ENCODE measurements at regions of chr3 and their contacts with region 1.

Region 1: DNA sequence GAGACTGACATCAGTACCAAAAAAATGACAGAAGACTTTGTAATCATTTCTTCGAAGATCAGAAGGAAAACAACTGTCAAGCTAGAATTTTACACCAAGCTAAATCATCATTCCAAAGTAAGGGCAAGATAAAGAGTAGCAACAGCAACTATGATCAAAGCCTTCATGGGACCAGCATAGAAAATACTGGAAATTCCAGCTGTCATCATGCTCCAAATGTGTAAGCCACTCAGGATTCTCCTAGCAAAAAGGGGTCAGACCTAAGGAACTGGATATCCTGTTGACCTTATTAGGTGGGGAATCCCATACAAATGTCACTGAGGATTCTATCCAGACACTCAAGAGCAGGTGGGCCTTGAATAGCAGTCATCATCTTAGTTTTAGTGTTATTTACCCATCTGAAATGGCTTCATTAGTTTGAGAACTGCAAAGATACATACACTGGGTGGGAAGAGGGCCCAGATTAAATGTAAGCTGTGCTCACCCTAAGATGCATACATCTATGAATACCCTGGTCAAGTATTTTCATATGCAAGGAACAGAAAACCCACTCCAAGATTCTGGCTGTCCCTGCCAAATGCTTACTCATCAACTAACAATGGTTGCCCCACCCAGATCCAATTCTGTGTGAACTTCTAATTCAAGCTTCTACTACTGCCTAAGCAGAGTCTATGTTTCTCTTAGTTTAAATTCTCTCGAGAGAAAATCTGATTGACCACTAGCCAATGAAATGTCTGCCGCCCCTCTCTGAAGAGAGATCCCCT is 33.5 kb downstream of the CLDN18 start:
- DNase-seq: no peak
- ATAC-seq: no peak
- H3K4me3 ChIP-seq: no peak overlapping the region
- H3K27ac ChIP-seq: no peak overlapping the region
- H3K4me1 ChIP-seq: peaks cover 29% of the 10 kb centered on the region
- H3K27me3 ChIP-seq: no peaks in the 10 kb centered on the region
- CTCF ChIP-seq: no peak
- EP300 ChIP-seq: no peak
- POLR2A ChIP-seq: no peak
- RAD21 ChIP-seq: no peak

Region 2: DNA sequence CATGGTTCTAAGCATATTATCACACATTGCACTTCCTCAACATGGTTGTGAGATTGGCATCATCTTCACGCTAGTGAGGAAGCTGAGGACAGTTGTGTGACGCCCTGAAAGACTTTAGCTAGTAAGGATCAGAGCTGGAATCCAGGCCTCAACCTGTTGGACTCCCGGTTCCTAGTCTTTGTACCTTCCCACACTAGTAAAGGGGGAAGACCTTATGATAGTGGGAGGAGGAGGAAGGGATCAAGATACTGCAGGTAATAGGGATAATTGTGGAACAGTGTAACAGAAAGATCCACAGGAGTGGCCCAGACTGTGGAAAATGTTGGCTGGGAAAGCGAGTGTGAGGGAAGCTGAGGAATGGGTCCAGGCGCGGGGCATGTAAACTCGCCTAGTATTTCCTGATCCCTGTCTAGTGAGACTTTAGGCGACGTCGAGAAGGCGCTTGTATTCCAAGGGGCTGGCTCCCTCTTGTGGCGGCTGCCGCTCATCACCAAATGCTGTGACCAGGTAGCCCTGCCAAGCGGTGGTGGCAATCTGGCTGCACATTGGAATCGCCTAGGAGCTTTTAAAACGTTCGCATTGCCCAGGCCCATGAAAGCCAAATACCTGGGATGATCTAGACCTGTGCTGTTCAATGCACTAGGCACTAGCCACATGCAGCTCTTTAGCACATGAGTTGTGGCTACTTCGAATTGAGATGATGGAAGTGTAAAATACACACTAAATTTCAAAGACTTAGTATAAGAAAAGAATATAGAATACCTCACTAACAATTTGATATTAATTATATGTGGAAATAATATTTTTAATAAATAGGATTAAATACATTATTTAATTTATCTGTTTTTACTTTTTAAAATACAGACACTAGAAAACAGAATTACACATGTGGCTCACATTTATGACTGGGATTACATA is 72.3 kb before region 1 on chr3:
- CTCF ChIA-PET with region 1: interaction called, 11 read pairs
- POLR2A ChIA-PET with region 1: interaction called, 3 read pairs
- RAD21 ChIA-PET with region 1: no interaction called
- SMC1A ChIA-PET with region 1: interaction called, 11 read pairs
- in situ Hi-C with region 1: no loop called
- intact Hi-C with region 1: no loop called
- DNase-seq: no peak
- ATAC-seq: peak; percentile 99
- H3K4me3 ChIP-seq: no peak overlapping the region
- H3K27ac ChIP-seq: no peak overlapping the region
- H3K4me1 ChIP-seq: no peaks in the 10 kb centered on the region
- H3K27me3 ChIP-seq: no peaks in the 10 kb centered on the region
- CTCF ChIP-seq: peak; percentile 80 to 87 (median 86)
- EP300 ChIP-seq: no peak
- POLR2A ChIP-seq: no peak
- RAD21 ChIP-seq: peak; percentile 72

Measured in GM12878 (cell line).